ENCODE measurements at regions of chr15 and their contacts with region 1.

Region 1: DNA sequence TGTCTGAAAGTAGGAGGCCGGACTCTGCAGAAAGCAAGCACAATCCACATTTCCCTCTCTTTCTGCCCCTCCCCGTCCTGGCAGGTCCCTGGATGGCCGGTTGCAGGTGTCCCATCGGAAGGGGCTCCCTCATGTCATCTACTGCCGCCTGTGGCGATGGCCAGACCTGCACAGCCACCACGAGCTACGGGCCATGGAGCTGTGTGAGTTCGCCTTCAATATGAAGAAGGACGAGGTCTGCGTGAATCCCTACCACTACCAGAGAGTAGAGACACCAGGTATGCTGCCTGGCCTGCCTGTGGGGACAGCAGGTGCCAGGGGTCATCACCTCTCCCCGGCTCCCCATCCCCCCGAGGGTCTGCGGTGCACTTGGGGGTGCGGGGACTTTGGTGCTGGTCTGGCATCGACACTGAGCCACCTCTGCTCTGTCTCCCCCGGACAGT is 89.6 kb downstream of the AAGAB start:
- DNase-seq: no peak
- ATAC-seq: no peak
- H3K4me3 Mint-ChIP-seq: no peak overlapping the region
- H3K27ac Mint-ChIP-seq: no peak overlapping the region
- H3K4me1 Mint-ChIP-seq: peaks cover 48% of the 10 kb centered on the region
- H3K27me3 Mint-ChIP-seq: no peaks in the 10 kb centered on the region
- CTCF ChIP-seq: no peak

Region 2: DNA sequence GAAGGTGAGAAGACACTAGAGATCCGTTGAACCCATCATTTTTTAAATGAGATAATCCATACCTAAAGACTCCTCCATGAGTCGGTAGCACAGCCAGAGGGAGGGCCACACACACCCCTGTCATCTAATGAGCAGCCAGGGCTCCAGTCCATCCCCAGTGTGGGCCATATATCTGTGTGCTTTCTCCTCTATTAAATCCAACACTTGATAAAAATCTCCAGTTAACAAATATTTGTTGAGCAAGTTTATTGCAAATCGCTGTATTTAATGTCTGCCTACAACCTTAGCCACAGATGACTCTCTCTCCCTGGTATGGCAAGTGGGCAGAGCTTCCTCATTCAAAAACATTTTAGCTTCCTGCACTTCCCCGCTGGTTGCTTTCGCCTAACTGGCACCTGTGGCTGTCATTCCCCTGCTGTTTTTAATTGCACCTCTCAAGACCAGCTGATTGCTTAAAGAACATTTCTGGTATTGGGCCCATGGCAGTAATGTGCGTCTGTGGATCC is 16.6 kb before region 1 on chr15:
- CTCF ChIA-PET with region 1: no interaction called
- POLR2A ChIA-PET with region 1: interaction called, 3 read pairs
- intact Hi-C with region 1: loop called (anchors 2 kb)
- DNase-seq: no peak
- ATAC-seq: peak; percentile 55
- H3K4me3 Mint-ChIP-seq: peak overlapping the region; percentile 12
- H3K27ac Mint-ChIP-seq: peak overlapping the region; percentile 57
- H3K4me1 Mint-ChIP-seq: peaks cover 91% of the 10 kb centered on the region
- H3K27me3 Mint-ChIP-seq: no peaks in the 10 kb centered on the region
- CTCF ChIP-seq: no peak

Measured in activated B cell treated with CpG ODN at 0.5 μM for 24 hours (primary cell).